ENCODE measurements at regions of chr11 and their contacts with region 1.

Region 1: DNA sequence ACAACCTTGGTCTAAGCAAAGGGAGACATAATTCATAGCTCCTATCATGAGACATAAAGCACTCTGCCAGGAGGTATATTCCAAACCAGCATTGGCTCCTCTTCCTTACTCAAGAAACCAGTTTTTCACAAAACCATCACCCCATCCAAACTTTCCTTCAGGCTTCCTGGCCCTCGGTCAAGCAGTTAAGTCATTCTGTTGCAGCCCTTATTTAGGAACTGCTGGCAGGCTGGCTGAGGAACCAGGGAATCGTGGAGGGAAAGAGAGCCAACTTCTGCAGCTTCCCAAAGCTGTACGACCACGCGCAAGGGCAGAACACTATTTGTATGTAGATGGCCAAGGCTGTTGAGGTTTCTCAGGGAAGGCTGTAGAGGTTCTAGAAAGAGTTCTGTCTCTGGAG is 680 bp downstream of the IFT46 start:
- DNase-seq: no peak
- ATAC-seq: no peak
- H3K4me3 ChIP-seq: peak overlapping the region; percentile 26; the same call in 1 of the 2 replicates
- H3K27ac ChIP-seq: no peak overlapping the region
- H3K4me1 ChIP-seq: 0 out of 2 replicates have a peak, but pooled peaks cover 4% of the 10 kb centered on the region
- H3K27me3 ChIP-seq: no peaks in the 10 kb centered on the region
- CTCF ChIP-seq: no peak
- EP300 ChIP-seq: no peak
- POLR2A ChIP-seq: no peak
- RAD21 ChIP-seq: no peak

Region 2: DNA sequence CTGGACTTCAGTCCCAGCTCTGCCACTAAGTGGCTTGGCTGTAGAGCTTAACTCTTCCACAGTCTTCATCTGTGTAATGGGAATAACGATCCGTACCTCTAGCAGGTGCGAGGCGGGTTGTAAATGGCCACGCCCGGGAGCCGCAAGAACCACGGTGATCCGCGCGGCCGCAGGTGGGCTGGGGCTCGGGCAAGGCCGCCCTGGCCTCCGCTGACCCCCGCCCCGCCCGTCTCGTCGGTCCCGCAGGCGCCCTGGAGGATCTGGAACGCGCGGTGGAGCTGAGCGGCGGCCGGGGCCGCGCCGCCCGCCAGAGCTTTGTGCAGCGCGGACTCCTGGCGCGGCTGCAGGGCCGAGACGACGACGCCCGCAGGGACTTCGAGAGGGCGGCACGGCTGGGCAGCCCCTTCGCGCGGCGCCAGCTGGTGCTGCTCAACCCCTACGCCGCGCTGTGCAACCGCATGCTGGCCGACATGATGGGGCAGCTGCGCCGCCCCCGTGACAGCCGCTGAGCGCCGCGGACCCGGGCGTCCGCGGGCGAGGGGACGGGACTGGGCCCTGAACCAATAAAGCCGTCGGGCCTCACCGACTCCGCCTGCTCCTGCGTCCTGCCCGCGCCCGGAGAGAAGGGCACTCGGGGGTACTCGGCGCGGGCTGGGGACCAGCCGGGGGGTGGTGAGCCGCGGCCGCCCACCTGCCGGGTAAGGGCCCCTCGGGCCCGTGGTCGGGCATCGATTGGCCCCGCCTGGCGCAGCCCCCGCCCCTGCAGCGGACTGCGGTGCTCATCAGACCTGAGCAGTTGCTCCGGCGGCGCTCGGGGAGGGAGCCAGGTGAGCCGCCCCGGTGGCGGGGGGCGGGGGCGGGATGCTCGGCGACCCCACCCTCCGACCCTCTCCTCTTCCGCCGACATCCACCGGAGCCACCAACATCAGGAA is 34.4 kb before region 1 on chr11 and contains the start of gene TMEM25:
- CTCF ChIA-PET with region 1: interaction called, 3 read pairs
- POLR2A ChIA-PET with region 1: no interaction called
- RAD21 ChIA-PET with region 1: interaction called, 4 read pairs
- SMC1A ChIA-PET with region 1: no interaction called
- in situ Hi-C with region 1: no loop called
- intact Hi-C with region 1: loop called (anchors 5 kb)
- DNase-seq: no peak
- ATAC-seq: peak; percentile 92
- H3K4me3 ChIP-seq: peak within 1 kb of the TSS; percentile 86
- H3K27ac ChIP-seq: no peak within 1 kb of the TSS
- H3K4me1 ChIP-seq: 0 out of 2 replicates have a peak, but pooled peaks cover 3% of the 10 kb centered on the region
- H3K27me3 ChIP-seq: no peaks in the 10 kb centered on the region
- CTCF ChIP-seq: no peak
- EP300 ChIP-seq: no peak
- POLR2A ChIP-seq: peak; percentile 68
- RAD21 ChIP-seq: no peak
- polyA plus RNA-seq, gene TMEM25: 1.4 to 1.7 TPM

Region 3: GRCh38 chr11:118895142-118896039 is 330.3 kb after region 1 on chr11:
- CTCF ChIA-PET with region 1: no interaction called
- POLR2A ChIA-PET with region 1: no interaction called
- RAD21 ChIA-PET with region 1: no interaction called
- SMC1A ChIA-PET with region 1: no interaction called
- in situ Hi-C with region 1: no loop called
- intact Hi-C with region 1: no loop called
- DNase-seq: peak; percentile 47
- ATAC-seq: peak; percentile 85
- H3K4me3 ChIP-seq: no peak overlapping the region
- H3K27ac ChIP-seq: no peak overlapping the region; the same call in 1 of the 2 replicates
- H3K4me1 ChIP-seq: peaks cover 44% of the 10 kb centered on the region
- H3K27me3 ChIP-seq: no peaks in the 10 kb centered on the region
- CTCF ChIP-seq: peak in 1 of 3 experiments; percentile 34; a peak in 2 of 6 replicates
- EP300 ChIP-seq: 0 out of 4 replicates have a peak, but pooled peaks of 1 of the 2 experiments have one; percentile 18
- POLR2A ChIP-seq: peak; percentile 34; the same call in 1 of the 2 replicates
- RAD21 ChIP-seq: peak; percentile 20; the same call in 1 of the 2 replicates